Activated CD4-positive, alpha-beta T cell treated with anti-CD3 and anti-CD28 coated beads, Interleukin-2, amount 10 ng/mL, durations not matched to agents 24 days and 14 days (primary cell): ENCODE measurements at regions of chr11 and their contacts with region 1.

Region 1: GRCh38 chr11:63938479-63939396 is at the start of gene NAA40:
- DNase-seq: peak; percentile 97
- H3K4me3 Mint-ChIP-seq: peak within 1 kb of the TSS; percentile 87
- H3K27ac Mint-ChIP-seq: peak within 1 kb of the TSS; percentile 80
- H3K4me1 Mint-ChIP-seq: peaks cover 17% of the 10 kb centered on the region
- H3K27me3 Mint-ChIP-seq: no peaks in the 10 kb centered on the region
- total RNA-seq, gene NAA40: 26.1 and 26.9 TPM in 2 replicates

Region 2: DNA sequence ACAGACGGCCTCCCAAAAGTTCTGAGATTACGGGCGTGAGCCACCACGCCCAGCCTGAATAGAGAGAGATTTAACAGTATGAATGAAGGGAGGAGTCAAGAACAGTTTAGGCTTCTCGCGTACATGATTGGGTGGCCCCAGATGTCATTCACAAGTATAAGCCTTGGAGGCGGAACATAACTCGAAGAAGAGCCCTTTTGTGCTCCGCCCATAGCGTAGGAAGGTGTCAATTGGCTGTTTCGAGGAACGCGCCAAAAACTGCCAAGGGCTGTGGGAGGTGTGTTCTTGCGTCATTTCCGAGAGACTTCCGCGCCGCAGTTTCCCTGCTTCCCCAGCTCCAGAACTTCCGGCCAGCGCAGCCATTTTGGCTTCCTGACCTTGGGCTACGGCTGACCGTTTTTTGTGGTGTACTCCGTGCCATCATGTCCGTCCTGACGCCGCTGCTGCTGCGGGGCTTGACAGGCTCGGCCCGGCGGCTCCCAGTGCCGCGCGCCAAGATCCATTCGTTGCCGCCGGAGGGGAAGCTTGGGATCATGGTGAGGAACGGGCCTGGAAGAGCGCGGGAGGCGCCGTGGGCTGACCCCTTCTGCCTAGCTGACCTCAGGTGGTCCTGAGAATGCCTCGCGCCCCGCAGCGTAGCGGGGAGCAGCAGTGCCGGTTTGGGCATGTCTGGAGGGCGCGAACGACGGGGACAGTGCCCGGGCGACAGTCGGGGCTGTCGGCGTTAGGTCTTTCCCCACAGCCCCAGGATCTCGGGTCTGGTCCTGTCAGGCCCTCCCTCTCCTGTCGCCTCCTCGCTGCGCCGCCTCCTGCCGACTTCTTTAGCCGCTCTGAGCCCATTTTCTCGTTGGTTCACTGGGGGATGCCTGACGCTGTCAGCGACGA is 35.8 kb after region 1 on chr11 and contains the start of gene COX8A:
- intact Hi-C with region 1: loop called (anchors 2 kb)
- DNase-seq: peak; percentile 99
- H3K4me3 Mint-ChIP-seq: peak within 1 kb of the TSS; percentile 100
- H3K27ac Mint-ChIP-seq: peak within 1 kb of the TSS; percentile 99
- H3K4me1 Mint-ChIP-seq: peaks cover 18% of the 10 kb centered on the region
- H3K27me3 Mint-ChIP-seq: peaks cover under 1% of the 10 kb centered on the region
- total RNA-seq, gene COX8A: 302 TPM in 2 replicates